ENCODE measurements at regions of chr2 and their contacts with region 1.

Region 1: DNA sequence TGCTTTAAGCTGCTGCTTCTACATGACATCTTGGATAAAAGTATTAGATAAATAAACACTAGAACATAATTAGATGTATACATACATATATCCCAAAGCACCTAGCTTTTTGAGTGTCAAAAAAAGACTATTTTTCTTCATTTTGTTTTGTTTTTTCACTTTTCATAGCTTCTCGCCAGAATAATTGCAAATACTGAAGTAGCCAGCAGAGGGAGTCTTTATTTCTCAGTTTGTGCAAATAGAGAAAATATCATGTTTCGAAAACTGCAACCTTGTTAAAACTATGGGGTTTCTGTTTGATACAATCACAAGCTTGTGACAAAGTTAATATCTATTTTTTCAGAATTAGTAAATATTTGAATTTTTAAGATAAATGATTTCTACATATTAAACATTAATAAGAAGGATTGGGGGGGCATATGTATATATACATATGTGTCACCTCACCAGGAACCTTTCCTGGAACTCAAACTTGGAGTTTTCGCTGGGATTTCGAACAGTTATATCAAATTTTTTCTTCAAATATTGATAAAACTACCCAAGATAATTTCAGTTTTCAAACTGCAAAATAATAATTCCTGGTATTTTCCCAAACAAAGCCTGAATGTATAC is 61.0 kb downstream of the GRB14 start:
- DNase-seq: no peak

Region 2: GRCh38 chr2:164599966-164600589 is 39.8 kb after region 1 on chr2:
- intact Hi-C with region 1: loop called in 1 of 2 experiments (anchors 5 kb)
- DNase-seq: no peak

Region 3: DNA sequence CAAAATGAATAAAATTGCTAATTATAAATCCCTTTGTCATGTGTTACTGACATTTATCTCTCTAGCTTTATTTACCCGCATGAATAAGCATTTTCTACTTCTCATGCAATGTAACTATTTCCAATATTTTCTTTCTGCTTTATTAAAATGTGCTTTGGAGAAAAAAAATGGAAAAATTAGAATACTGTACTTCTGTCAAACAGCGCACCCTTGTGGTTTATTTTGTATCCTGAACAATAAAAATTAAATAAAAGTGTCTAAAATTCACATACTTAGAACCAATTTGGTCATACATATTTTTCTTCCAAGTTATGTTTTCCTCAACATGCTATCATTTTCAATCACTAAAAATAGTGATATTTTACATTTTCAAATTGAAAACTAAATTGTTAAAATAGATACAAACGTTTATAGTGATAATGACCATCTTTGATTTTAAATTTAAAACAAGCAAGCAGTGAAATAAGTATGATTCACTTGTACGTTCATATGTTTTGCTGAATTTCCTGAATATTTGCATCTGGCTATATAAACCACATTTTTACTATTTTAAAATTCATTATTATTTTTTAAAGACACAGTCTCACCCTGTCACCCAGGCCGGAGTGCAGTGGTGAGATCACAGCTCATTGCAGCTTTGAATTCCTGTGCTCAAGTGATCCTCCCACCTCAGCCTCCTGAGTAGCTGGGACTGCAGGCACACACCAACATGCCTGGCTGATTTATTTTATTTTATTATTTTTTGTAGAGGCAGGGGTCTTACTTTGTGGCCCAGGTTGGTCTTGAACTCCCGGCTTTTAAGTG is 156.9 kb after region 1 on chr2:
- intact Hi-C with region 1: loop called (anchors 10 kb)
- DNase-seq: no peak

Measured in posterior vena cava (tissue), 2 donors.